PC-3 (cell line): ENCODE measurements at regions of chr12 and their contacts with region 1.

Region 1: GRCh38 chr12:810671-811415 is 58.5 kb downstream of the WNK1 start:
- DNase-seq: no peak
- ATAC-seq: no peak
- H3K4me3 ChIP-seq: no peak overlapping the region
- H3K27ac ChIP-seq: no peak overlapping the region
- H3K4me1 ChIP-seq: no peaks in the 10 kb centered on the region
- H3K27me3 ChIP-seq: no peaks in the 10 kb centered on the region
- CTCF ChIP-seq: no peak

Region 2: DNA sequence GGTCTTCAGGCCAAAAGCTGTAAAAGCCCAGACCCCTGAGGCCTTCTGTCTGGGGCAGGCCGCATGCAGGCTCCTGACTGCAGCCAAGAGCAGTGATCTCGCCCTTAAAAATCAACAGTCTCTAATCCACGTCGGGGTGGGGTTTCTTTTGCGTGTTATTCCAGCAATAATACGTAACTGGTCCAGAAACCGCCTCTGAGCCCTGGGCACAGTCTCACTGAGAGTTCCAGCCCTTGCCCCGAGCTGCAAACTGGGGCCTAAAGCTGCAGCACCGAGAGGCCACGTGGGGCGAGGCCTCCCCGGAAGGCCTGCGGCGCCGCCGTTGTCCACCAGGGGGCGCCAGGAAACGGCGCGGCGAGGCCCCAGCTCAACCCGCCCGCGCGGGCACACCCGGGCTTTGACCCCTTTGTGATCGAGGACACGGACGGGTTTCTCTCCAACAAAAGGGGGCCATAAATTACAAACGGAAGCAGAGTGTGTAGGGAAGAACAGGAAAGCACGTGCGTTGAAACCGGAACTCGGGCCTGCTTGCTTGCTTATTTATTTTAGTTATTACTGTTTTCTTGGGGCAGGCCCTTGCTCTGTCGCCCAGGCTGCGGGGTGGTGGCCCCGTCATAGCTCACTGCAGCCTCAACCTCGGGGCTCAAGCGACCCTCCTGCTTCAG is 234.8 kb before region 1 on chr12:
- CTCF ChIA-PET with region 1: interaction called, 4 read pairs
- POLR2A ChIA-PET with region 1: interaction called, 4 read pairs
- intact Hi-C with region 1: loop called (anchors 1 kb)
- DNase-seq: peak; percentile 79
- ATAC-seq: peak; percentile 54
- H3K4me3 ChIP-seq: no peak overlapping the region
- H3K27ac ChIP-seq: no peak overlapping the region
- H3K4me1 ChIP-seq: peaks cover 19% of the 10 kb centered on the region
- H3K27me3 ChIP-seq: no peaks in the 10 kb centered on the region
- CTCF ChIP-seq: peak; percentile 95

Region 3: GRCh38 chr12:843609-844008 is 32.8 kb after region 1 on chr12:
- CTCF ChIA-PET with region 1: no interaction called
- POLR2A ChIA-PET with region 1: no interaction called
- intact Hi-C with region 1: no loop called
- DNase-seq: peak; percentile 84
- ATAC-seq: peak; percentile 91
- H3K4me3 ChIP-seq: no peak overlapping the region
- H3K27ac ChIP-seq: no peak overlapping the region
- H3K4me1 ChIP-seq: peaks cover 9% of the 10 kb centered on the region
- H3K27me3 ChIP-seq: no peaks in the 10 kb centered on the region
- CTCF ChIP-seq: no peak

Region 4: DNA sequence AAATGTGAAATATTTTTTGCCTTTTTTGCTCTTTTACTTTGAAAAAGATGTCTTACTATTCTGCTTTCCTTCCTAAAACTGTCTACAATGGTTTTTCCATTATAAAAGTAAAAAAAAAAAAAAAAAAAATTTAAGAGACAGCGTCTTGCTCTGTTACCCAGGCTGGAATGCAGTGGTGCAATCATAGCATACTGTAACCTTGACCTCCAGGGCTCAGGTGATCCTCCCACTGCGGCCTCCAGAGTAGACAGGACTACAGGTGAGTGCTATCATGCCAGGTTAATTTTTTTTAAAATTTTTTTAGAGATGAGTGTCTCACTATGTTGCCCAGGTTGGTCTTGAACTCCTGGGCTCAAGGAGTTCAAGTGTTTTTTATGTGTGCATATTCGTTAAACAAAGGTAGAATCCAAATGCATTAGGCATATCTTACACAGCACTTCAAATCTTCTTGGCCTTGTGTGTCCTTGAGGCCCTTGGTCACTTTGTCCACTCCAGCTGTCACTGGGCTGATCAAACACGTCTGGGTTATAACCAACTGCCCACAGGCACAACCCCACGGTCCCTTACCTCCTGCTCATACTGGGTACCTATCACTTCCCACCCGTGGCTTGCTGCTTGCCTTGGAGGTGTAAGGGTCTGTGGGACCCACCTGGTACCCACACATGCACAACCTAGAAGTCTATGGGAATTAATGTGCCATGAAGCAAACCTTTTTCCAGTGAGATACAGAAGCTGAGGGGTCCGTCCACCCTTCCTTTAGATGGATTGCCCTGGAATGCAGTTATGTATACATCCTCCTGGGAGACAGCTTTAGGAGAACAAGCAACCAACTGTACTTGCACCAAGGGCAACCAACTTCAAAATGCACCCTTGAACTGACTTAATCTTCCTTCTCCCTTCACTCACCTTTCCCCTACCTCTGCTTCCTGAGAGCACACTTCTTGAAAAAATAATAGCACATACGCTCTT is 125.8 kb after region 1 on chr12:
- CTCF ChIA-PET with region 1: no interaction called
- POLR2A ChIA-PET with region 1: no interaction called
- intact Hi-C with region 1: no loop called
- DNase-seq: no peak
- ATAC-seq: no peak
- H3K4me3 ChIP-seq: no peak overlapping the region
- H3K27ac ChIP-seq: no peak overlapping the region
- H3K4me1 ChIP-seq: no peaks in the 10 kb centered on the region
- H3K27me3 ChIP-seq: no peaks in the 10 kb centered on the region
- CTCF ChIP-seq: no peak